Ascending aorta (tissue), 2 donors: ENCODE measurements at regions of chr5 and their contacts with region 1.

Region 1: DNA sequence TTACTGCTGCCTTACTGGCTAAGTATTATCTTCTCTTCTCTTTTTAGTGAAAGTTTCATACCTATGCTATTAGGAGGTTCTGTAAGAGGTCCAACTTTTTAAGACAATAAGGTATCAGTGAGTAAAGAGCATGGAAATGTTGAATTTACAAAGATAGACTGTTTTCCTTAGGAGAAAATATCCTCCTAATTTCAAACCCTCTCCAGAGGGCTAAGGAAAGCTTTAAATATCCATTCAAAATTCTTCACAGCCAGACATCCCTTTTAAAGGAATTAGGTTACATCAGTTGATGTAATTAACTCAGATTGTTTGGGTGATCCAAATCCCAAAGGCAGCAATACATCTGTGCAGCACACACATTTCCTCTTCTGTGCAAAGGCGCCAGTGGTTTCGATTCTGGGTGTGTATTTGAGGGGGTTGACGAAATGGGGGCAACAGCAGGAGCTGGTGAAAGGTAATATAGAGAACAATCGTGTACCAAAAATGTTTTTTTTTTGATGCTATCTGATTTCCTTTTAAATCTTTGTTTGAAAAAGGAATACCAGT is 273.8 kb upstream of the RPS23 start:
- DNase-seq: no peak
- H3K4me3 ChIP-seq: peak overlapping the region in 1 of 2 donors; percentile 34
- H3K27ac ChIP-seq: peak overlapping the region; percentile 64 to 77
- H3K4me1 ChIP-seq: peaks cover 0 to 15% of the 10 kb centered on the region in 2 donors
- H3K27me3 ChIP-seq: no peaks in the 10 kb centered on the region
- CTCF ChIP-seq: no peak

Region 2: DNA sequence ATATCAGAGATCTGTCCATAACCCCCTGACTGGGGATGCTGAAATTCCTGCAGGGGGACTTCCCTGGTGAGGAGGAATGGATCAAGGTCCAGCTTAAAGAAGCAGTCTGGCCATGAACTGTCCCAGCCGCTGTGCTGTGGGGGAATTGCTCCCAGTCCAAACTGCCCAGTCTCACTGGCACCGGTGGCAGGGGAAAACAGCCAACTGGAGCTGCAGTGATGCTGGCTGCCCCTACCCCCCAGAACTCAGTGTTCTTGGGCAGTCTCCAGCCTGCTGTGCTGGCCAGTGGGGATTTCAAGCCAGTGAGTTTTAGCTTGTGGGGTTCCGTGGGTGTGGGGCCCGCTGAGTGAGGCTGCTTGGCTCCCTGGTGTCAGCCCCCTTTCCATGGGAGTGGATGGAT is 32.7 kb after region 1 on chr5:
- intact Hi-C with region 1: loop called (anchors 5 kb)
- DNase-seq: peak in 1 of 2 donors; percentile 74
- H3K4me3 ChIP-seq: peak overlapping the region in 1 of 2 donors; percentile 19
- H3K27ac ChIP-seq: peak overlapping the region; percentile 62 to 67
- H3K4me1 ChIP-seq: peaks cover 0 to 28% of the 10 kb centered on the region in 2 donors
- H3K27me3 ChIP-seq: no peaks in the 10 kb centered on the region
- CTCF ChIP-seq: no peak

Region 3: GRCh38 chr5:83553000-83553486 is 1001.1 kb after region 1 on chr5:
- intact Hi-C with region 1: loop called (anchors 10 kb)
- DNase-seq: peak; percentile 18 to 92
- H3K4me3 ChIP-seq: no peak overlapping the region
- H3K27ac ChIP-seq: peak overlapping the region; percentile 75 to 82
- H3K4me1 ChIP-seq: peaks cover 0 to 42% of the 10 kb centered on the region in 2 donors
- H3K27me3 ChIP-seq: no peaks in the 10 kb centered on the region
- CTCF ChIP-seq: no peak